ENCODE measurements at regions of chr17 and their contacts with region 1.

Region 1: DNA sequence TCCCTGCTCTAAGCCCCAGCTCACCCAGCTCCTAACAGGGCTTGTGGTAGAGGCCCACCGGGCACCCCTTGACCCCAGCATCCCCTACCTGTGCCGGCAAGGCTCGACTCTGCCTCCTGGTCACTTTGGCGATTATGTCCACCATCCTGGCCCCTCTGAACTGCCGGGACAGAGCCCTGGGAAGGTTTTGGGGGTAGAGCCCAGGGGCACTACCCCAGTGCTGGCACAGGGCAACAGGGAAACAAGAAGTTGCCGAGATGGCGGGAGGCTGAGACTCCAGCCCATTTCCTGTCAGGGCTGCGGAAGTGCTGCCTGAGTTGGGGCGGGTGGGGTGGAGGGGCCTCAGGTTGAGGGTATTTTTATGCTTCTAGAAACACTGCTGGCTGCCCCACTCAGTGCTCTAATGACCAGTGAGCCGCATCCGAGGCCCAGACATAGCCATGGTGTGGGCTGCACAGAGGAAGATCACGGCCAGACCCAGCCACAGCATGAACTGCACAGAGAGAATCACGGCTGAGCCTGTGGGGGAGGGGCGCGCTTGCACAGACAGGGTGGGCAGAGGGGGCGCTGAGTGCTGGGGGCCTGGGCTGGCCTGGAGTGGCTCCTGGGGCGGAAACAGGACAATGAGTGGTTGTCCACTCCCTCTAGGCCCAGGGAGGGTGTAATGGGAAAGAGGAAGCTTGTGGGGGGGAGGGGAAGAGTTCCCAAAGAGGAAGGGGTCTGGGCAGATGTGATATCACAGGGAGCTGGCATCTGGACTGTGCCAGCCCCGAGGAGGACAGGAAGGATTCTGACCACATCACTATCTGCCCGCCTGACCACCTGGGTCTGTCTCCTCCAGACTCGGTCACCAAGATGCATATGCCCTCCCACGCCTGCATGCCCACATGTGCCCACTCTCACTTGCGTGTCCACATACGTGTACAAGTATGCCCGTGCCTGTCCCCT is 22.3 kb downstream of the ARHGAP27 start:
- DNase-seq: no peak
- H3K4me3 ChIP-seq: no peak overlapping the region
- H3K27ac ChIP-seq: no peak overlapping the region
- H3K4me1 ChIP-seq: peaks cover 0 to 21% (median 10%) of the 10 kb centered on the region in 4 experiments; a peak in 5 of 7 replicates
- H3K27me3 ChIP-seq: no peaks in the 10 kb centered on the region
- CTCF ChIP-seq: no peak
- EP300 ChIP-seq: no peak
- POLR2A ChIP-seq: no peak
- RAD21 ChIP-seq: no peak

Region 2: DNA sequence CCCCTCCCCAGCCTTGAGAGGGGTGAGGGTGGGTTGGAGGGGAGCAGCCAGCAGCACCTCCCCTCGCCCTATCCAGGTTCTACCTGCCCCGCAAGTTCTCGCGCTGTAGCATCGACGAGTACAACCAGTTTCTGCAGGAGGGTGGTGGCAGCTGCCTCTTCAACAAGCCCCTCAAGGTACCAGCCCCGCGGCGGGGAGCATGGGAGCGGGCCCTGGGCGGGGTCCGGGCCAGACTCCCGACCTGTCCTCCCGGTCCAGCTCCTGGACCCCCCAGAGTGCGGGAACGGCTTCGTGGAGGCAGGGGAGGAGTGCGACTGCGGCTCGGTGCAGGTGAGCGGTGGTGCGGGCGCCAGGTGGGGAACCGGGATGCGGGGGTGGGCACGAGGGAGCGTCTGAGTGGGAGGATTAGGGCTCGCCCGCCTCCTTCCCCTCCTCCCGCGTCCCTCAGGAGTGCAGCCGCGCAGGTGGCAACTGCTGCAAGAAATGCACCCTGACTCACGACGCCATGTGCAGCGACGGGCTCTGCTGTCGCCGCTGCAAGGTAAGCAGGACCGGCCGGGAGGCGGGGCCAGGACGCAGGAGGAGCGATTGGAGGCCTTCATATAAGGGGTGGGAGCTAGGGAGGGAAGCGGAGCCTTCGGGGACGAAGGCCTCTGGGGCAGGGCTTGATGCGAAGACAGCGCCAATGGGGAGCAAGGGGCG is 635.1 kb before region 1 on chr17:
- CTCF ChIA-PET with region 1: no interaction called
- POLR2A ChIA-PET with region 1: no interaction called
- DNase-seq: peak; percentile 99
- H3K4me3 ChIP-seq: peak overlapping the region; percentile 45 to 76 (median 59)
- H3K27ac ChIP-seq: no peak overlapping the region
- H3K4me1 ChIP-seq: peaks cover 0 to 14% (median 4%) of the 10 kb centered on the region in 4 experiments; a peak in 5 of 7 replicates
- H3K27me3 ChIP-seq: peaks cover 3 to 18% (median 12%) of the 10 kb centered on the region in 4 experiments; a peak in 6 of 7 replicates
- CTCF ChIP-seq: no peak
- EP300 ChIP-seq: no peak
- POLR2A ChIP-seq: peak in 1 of 2 experiments; percentile 54; a peak in 2 of 3 replicates
- RAD21 ChIP-seq: no peak

Region 3: GRCh38 chr17:45260204-45260783 is 150.1 kb before region 1 on chr17:
- CTCF ChIA-PET with region 1: no interaction called
- POLR2A ChIA-PET with region 1: no interaction called
- DNase-seq: no peak
- H3K4me3 ChIP-seq: no peak overlapping the region
- H3K27ac ChIP-seq: no peak overlapping the region
- H3K4me1 ChIP-seq: peaks cover 4 to 19% (median 13%) of the 10 kb centered on the region in 4 experiments
- H3K27me3 ChIP-seq: peaks cover 0 to 5% (median 2%) of the 10 kb centered on the region in 4 experiments; a peak in 3 of 7 replicates
- CTCF ChIP-seq: no peak
- EP300 ChIP-seq: no peak
- POLR2A ChIP-seq: no peak
- RAD21 ChIP-seq: no peak

Region 4: DNA sequence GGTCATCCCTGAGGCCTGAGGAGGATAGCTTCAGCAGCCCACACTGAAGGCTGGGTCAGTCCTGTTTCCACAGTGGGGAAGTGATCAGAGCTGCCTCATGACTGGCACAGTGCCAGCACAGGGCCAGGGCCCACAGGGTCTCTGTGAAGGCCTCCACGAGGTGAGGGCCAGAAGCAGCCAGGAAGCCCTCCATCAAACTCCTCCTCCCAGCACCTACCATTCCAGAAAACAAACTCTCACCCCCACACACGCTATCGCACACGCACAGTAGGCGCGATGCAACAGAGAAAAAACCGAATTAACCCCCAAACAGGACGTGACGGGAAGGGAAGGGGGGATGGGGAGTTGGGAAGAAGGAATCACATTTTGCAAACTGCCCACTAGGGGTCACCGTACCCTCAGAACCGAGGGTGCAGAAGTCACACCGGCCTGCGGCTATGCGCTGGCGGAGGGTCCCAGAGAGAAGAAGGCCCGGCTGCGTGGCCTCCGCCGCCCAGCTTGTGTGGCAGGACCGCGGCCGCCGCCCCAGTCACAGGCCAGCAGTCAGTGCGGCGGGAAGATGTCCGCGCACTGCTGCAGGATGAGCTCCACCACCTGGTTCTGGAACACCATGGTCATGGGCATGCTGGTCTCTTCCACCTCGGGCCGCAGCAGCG is 15.4 kb before region 1 on chr17:
- CTCF ChIA-PET with region 1: interaction called, 39 read pairs
- POLR2A ChIA-PET with region 1: interaction called, 3 read pairs
- DNase-seq: peak; percentile 72 to 88
- H3K4me3 ChIP-seq: no peak overlapping the region; a peak in 1 of 8 replicates
- H3K27ac ChIP-seq: no peak overlapping the region
- H3K4me1 ChIP-seq: peaks cover 0 to 4% (median 3%) of the 10 kb centered on the region in 4 experiments; a peak in 4 of 7 replicates
- H3K27me3 ChIP-seq: peaks cover 0 to 2% (median 0%) of the 10 kb centered on the region in 4 experiments; a peak in 2 of 7 replicates
- CTCF ChIP-seq: peak; percentile 82 to 87 (median 87)
- EP300 ChIP-seq: no peak
- POLR2A ChIP-seq: peak in 1 of 2 experiments; percentile 39; a peak in 1 of 3 replicates
- RAD21 ChIP-seq: peak; percentile 87 to 89

Measured in H1 (cell line).